ENCODE measurements at regions of chr2 and their contacts with region 1.

Region 1: GRCh38 chr2:42196403-42197267 is 27.5 kb downstream of the EML4 start:
- DNase-seq: peak; percentile 56 to 66 (median 63)
- H3K4me3 ChIP-seq: no peak overlapping the region
- H3K4me3 Mint-ChIP-seq: peak overlapping the region in 7 of 8 donors; percentile 7 to 67 (median 51)
- H3K27ac ChIP-seq: no peak overlapping the region
- H3K27ac Mint-ChIP-seq: peak overlapping the region; percentile 40 to 87 (median 74)
- H3K4me1 ChIP-seq: peaks cover 97% of the 10 kb centered on the region
- H3K4me1 Mint-ChIP-seq: peaks cover 59 to 94% (median 74%) of the 10 kb centered on the region in 4 donors
- H3K27me3 ChIP-seq: no peaks in the 10 kb centered on the region
- H3K27me3 Mint-ChIP-seq: no peaks in the 10 kb centered on the region

Region 2: DNA sequence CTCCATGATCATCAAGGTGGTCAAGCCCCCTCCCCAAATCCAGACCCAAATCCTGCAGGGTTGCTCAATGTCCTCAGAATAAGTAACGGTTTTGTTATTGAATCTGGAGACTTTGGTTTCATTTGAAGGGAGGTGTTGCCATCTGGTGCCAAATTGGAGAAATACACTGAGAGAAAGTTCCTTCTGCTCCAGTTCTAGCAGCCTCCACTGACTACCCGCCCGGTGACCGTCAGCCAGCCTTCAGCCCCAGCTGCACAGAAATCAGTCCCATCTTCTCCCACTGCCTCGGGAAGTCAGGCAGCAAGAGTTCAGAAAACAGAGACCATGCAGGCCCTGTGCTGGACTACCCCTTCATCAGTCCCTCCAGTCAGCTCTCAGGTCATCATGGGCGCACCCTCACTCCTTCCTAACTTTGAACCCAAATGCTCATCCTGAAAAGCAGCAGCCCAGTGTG is 110.1 kb before region 1 on chr2:
- CTCF ChIA-PET with region 1: interaction called, 12 read pairs
- POLR2A ChIA-PET with region 1: no interaction called
- intact Hi-C with region 1: no loop called
- DNase-seq: peak; percentile 57 to 65 (median 62)
- H3K4me3 ChIP-seq: no peak overlapping the region
- H3K4me3 Mint-ChIP-seq: no peak overlapping the region
- H3K27ac ChIP-seq: no peak overlapping the region
- H3K27ac Mint-ChIP-seq: peak overlapping the region in 1 of 7 donors; percentile 9
- H3K4me1 ChIP-seq: peaks cover 7% of the 10 kb centered on the region
- H3K4me1 Mint-ChIP-seq: peaks cover 6 to 19% (median 10%) of the 10 kb centered on the region in 4 donors
- H3K27me3 ChIP-seq: no peaks in the 10 kb centered on the region
- H3K27me3 Mint-ChIP-seq: peaks cover 0 to 2% of the 10 kb centered on the region in 2 donors

Region 3: GRCh38 chr2:42127425-42128424 is 68.9 kb before region 1 on chr2:
- CTCF ChIA-PET with region 1: interaction called, 31 read pairs
- POLR2A ChIA-PET with region 1: interaction called, 7 read pairs
- intact Hi-C with region 1: no loop called
- DNase-seq: peak; percentile 61 to 71 (median 66)
- H3K4me3 ChIP-seq: peak overlapping the region in 1 of 2 donors; percentile 41
- H3K4me3 Mint-ChIP-seq: peak overlapping the region; percentile 36 to 81 (median 74)
- H3K27ac ChIP-seq: peak overlapping the region; percentile 52
- H3K27ac Mint-ChIP-seq: peak overlapping the region; percentile 88 to 100 (median 96)
- H3K4me1 ChIP-seq: peaks cover 97% of the 10 kb centered on the region
- H3K4me1 Mint-ChIP-seq: peaks cover 71 to 99% (median 88%) of the 10 kb centered on the region in 4 donors
- H3K27me3 ChIP-seq: no peaks in the 10 kb centered on the region
- H3K27me3 Mint-ChIP-seq: no peaks in the 10 kb centered on the region

Region 4: GRCh38 chr2:42183775-42184174 is 12.9 kb before region 1 on chr2:
- CTCF ChIA-PET with region 1: interaction called, 11 read pairs
- POLR2A ChIA-PET with region 1: interaction called, 4 read pairs
- intact Hi-C with region 1: loop called (anchors 1 kb)
- DNase-seq: no peak
- H3K4me3 ChIP-seq: no peak overlapping the region
- H3K4me3 Mint-ChIP-seq: peak overlapping the region in 3 of 8 donors; percentile 19 to 47 (median 40)
- H3K27ac ChIP-seq: no peak overlapping the region
- H3K27ac Mint-ChIP-seq: peak overlapping the region in 2 of 7 donors; percentile 27 to 38
- H3K4me1 ChIP-seq: peaks cover 88% of the 10 kb centered on the region
- H3K4me1 Mint-ChIP-seq: peaks cover 63 to 90% (median 76%) of the 10 kb centered on the region in 4 donors
- H3K27me3 ChIP-seq: no peaks in the 10 kb centered on the region
- H3K27me3 Mint-ChIP-seq: no peaks in the 10 kb centered on the region

Region 5: DNA sequence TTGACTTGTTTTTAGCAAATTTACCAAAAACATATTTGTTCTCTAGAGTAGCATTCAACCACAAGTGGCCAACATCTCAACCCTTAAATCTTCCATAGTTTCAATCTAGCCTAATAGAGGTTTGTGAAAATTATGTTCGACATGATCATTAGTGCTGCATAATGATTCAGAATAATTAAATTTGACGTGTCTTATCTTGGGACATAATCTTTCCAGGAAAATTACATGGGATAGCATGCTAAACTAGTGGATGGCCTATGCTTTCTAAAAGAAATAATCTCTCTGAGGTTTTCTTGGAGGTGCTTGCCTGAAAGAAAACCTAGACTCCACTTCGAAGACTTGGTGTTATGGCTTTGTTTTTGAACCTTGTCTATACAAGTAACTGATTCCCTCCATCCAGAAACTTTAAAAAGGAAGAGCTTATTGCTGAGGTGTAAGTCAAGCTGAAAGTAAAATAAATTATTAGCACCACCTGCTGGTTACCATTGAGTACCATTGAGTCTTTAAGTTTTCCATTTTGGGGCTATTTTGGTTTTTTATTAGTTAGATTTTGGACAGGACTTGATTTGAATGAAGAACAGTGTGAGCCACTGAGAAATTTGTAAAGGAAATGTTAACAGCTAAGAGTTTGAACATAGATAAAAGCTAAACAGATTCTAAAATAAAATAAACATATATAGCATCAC is 131.7 kb after region 1 on chr2:
- CTCF ChIA-PET with region 1: interaction called, 7 read pairs
- POLR2A ChIA-PET with region 1: interaction called, 3 read pairs
- intact Hi-C with region 1: loop called (anchors 2 kb)
- DNase-seq: peak in 4 of 5 donors; percentile 31 to 37 (median 33)
- H3K4me3 ChIP-seq: no peak overlapping the region
- H3K4me3 Mint-ChIP-seq: no peak overlapping the region
- H3K27ac ChIP-seq: no peak overlapping the region
- H3K27ac Mint-ChIP-seq: peak overlapping the region; percentile 0 to 85 (median 62)
- H3K4me1 ChIP-seq: no peaks in the 10 kb centered on the region
- H3K4me1 Mint-ChIP-seq: peaks cover 2 to 9% (median 5%) of the 10 kb centered on the region in 4 donors
- H3K27me3 ChIP-seq: no peaks in the 10 kb centered on the region
- H3K27me3 Mint-ChIP-seq: no peaks in the 10 kb centered on the region

Measured in CD4-positive, alpha-beta memory T cell (primary cell).